ENCODE measurements at regions of chr6 and their contacts with region 1.

Region 1: GRCh38 chr6:36759148-36759759 is 61.6 kb downstream of the RAB44 start:
- DNase-seq: peak; percentile 71 to 77 (median 76)
- H3K4me3 ChIP-seq: no peak overlapping the region
- H3K4me3 Mint-ChIP-seq: peak overlapping the region in 1 of 8 donors; percentile 47
- H3K27ac ChIP-seq: no peak overlapping the region
- H3K27ac Mint-ChIP-seq: peak overlapping the region; percentile 37 to 96 (median 86)
- H3K4me1 ChIP-seq: peaks cover 43% of the 10 kb centered on the region
- H3K4me1 Mint-ChIP-seq: peaks cover 39 to 50% (median 44%) of the 10 kb centered on the region in 4 donors
- H3K27me3 ChIP-seq: no peaks in the 10 kb centered on the region
- H3K27me3 Mint-ChIP-seq: no peaks in the 10 kb centered on the region

Region 2: GRCh38 chr6:36340618-36341454 is 418.4 kb before region 1 on chr6:
- CTCF ChIA-PET with region 1: interaction called, 13 read pairs
- POLR2A ChIA-PET with region 1: no interaction called
- intact Hi-C with region 1: no loop called
- DNase-seq: peak; percentile 59 to 66 (median 64)
- H3K4me3 ChIP-seq: no peak overlapping the region
- H3K4me3 Mint-ChIP-seq: peak overlapping the region; percentile 63 to 85 (median 74)
- H3K27ac ChIP-seq: no peak overlapping the region
- H3K27ac Mint-ChIP-seq: peak overlapping the region in 4 of 7 donors; percentile 7 to 88 (median 58)
- H3K4me1 ChIP-seq: peaks cover 20% of the 10 kb centered on the region
- H3K4me1 Mint-ChIP-seq: peaks cover 9 to 33% (median 14%) of the 10 kb centered on the region in 4 donors
- H3K27me3 ChIP-seq: peaks cover 7% of the 10 kb centered on the region
- H3K27me3 Mint-ChIP-seq: peaks cover 6 to 9% of the 10 kb centered on the region in 2 donors

Region 3: GRCh38 chr6:36428911-36429310 is 330.3 kb before region 1 on chr6:
- CTCF ChIA-PET with region 1: interaction called, 10 read pairs
- POLR2A ChIA-PET with region 1: no interaction called
- intact Hi-C with region 1: no loop called
- DNase-seq: peak in 1 of 5 donors; percentile 4
- H3K4me3 ChIP-seq: no peak overlapping the region
- H3K4me3 Mint-ChIP-seq: no peak overlapping the region
- H3K27ac ChIP-seq: no peak overlapping the region
- H3K27ac Mint-ChIP-seq: no peak overlapping the region
- H3K4me1 ChIP-seq: peaks cover 3% of the 10 kb centered on the region
- H3K4me1 Mint-ChIP-seq: peaks cover under 1 to 3% (median under 1%) of the 10 kb centered on the region in 4 donors
- H3K27me3 ChIP-seq: no peaks in the 10 kb centered on the region
- H3K27me3 Mint-ChIP-seq: no peaks in the 10 kb centered on the region

Region 4: GRCh38 chr6:36546920-36547645 is 212.2 kb before region 1 on chr6 and contains the start of gene STK38:
- CTCF ChIA-PET with region 1: interaction called, 6 read pairs
- POLR2A ChIA-PET with region 1: interaction called, 3 read pairs
- intact Hi-C with region 1: loop called (anchors 2 kb)
- DNase-seq: peak; percentile 85 to 90 (median 87)
- H3K4me3 ChIP-seq: peak within 1 kb of the TSS; percentile 89 to 99
- H3K4me3 Mint-ChIP-seq: peak within 1 kb of the TSS; percentile 94 to 100 (median 100)
- H3K27ac ChIP-seq: peak within 1 kb of the TSS; percentile 92
- H3K27ac Mint-ChIP-seq: peak within 1 kb of the TSS; percentile 94 to 99 (median 98)
- H3K4me1 ChIP-seq: peaks cover 48% of the 10 kb centered on the region
- H3K4me1 Mint-ChIP-seq: peaks cover 23 to 65% (median 39%) of the 10 kb centered on the region in 4 donors
- H3K27me3 ChIP-seq: no peaks in the 10 kb centered on the region
- H3K27me3 Mint-ChIP-seq: no peaks in the 10 kb centered on the region
- total RNA-seq, gene STK38: 186 to 190 TPM

Region 5: DNA sequence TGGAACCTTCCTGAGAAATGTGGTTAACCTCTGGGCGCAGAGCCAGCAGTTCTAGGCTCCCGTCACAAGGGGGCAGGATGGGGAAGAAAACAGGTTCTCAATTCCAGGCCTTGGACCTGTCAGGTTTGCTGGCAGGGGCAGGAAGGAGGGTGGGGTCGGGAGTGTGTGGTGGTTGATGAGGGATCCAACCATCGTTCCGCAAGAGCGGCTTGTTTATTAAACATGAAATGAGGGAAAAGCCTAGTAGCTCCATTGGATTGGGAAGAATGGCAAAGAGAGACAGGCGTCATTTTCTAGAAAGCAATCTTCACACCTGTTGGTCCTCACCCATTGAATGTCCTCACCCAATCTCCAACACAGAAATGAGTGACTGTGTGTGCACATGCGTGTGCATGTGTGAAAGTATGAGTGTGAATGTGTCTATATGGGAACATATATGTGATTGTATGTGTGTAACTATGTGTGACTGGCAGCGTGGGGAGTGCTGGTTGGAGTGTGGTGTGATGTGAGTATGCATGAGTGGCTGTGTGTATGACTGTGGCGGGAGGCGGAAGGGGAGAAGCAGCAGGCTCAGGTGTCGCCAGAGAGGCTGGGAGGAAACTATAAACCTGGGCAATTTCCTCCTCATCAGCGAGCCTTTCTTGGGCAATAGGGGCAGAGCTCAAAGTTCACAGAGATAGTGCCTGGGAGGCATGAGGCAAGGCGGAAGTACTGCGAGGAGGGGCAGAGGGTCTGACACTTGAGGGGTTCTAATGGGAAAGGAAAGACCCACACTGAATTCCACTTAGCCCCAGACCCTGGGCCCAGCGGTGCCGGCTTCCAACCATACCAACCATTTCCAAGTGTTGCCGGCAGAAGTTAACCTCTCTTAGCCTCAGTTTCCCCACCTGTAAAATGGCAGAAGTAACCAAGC is 135.5 kb before region 1 on chr6:
- CTCF ChIA-PET with region 1: interaction called, 66 read pairs
- POLR2A ChIA-PET with region 1: interaction called, 7 read pairs
- intact Hi-C with region 1: loop called (anchors 1 kb)
- DNase-seq: peak; percentile 65 to 78 (median 73)
- H3K4me3 ChIP-seq: no peak overlapping the region
- H3K4me3 Mint-ChIP-seq: no peak overlapping the region
- H3K27ac ChIP-seq: no peak overlapping the region
- H3K27ac Mint-ChIP-seq: peak overlapping the region; percentile 32 to 82 (median 69)
- H3K4me1 ChIP-seq: peaks cover 9% of the 10 kb centered on the region
- H3K4me1 Mint-ChIP-seq: peaks cover 5 to 16% (median 9%) of the 10 kb centered on the region in 4 donors
- H3K27me3 ChIP-seq: no peaks in the 10 kb centered on the region
- H3K27me3 Mint-ChIP-seq: no peaks in the 10 kb centered on the region

Region 6: GRCh38 chr6:36724514-36725390 is 34.5 kb before region 1 on chr6:
- CTCF ChIA-PET with region 1: interaction called, 11 read pairs
- POLR2A ChIA-PET with region 1: no interaction called
- intact Hi-C with region 1: loop called (anchors 5 kb)
- DNase-seq: peak in 2 of 5 donors; percentile 15 to 19
- H3K4me3 ChIP-seq: no peak overlapping the region
- H3K4me3 Mint-ChIP-seq: no peak overlapping the region
- H3K27ac ChIP-seq: no peak overlapping the region
- H3K27ac Mint-ChIP-seq: no peak overlapping the region
- H3K4me1 ChIP-seq: peaks cover 14% of the 10 kb centered on the region
- H3K4me1 Mint-ChIP-seq: peaks cover 18 to 29% (median 25%) of the 10 kb centered on the region in 4 donors
- H3K27me3 ChIP-seq: no peaks in the 10 kb centered on the region
- H3K27me3 Mint-ChIP-seq: no peaks in the 10 kb centered on the region

Region 7: DNA sequence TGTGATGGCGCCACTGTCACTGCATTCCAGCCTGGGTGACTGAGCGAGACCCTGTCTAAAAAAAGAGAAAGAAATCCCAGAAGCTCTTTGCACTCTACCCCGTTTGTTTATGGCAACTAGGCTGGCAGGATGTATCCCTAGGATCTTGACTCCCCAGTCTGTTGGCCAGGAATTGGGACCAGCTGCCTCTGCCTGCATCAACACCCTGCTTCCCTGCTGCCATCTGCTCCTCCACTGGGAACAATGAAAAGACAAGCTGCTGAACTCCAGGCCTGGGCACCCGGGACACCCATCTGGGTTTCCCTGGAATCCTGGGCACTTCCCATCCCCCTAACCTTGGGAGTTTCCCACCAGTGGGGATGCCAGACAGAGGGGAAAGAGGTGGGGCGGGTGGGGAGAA is 15.1 kb after region 1 on chr6:
- CTCF ChIA-PET with region 1: interaction called, 230 read pairs
- POLR2A ChIA-PET with region 1: interaction called, 7 read pairs
- intact Hi-C with region 1: no loop called
- DNase-seq: no peak
- H3K4me3 ChIP-seq: no peak overlapping the region
- H3K4me3 Mint-ChIP-seq: no peak overlapping the region
- H3K27ac ChIP-seq: no peak overlapping the region
- H3K27ac Mint-ChIP-seq: no peak overlapping the region
- H3K4me1 ChIP-seq: peaks cover 18% of the 10 kb centered on the region
- H3K4me1 Mint-ChIP-seq: peaks cover 20 to 23% (median 22%) of the 10 kb centered on the region in 4 donors
- H3K27me3 ChIP-seq: no peaks in the 10 kb centered on the region
- H3K27me3 Mint-ChIP-seq: no peaks in the 10 kb centered on the region

Region 8: DNA sequence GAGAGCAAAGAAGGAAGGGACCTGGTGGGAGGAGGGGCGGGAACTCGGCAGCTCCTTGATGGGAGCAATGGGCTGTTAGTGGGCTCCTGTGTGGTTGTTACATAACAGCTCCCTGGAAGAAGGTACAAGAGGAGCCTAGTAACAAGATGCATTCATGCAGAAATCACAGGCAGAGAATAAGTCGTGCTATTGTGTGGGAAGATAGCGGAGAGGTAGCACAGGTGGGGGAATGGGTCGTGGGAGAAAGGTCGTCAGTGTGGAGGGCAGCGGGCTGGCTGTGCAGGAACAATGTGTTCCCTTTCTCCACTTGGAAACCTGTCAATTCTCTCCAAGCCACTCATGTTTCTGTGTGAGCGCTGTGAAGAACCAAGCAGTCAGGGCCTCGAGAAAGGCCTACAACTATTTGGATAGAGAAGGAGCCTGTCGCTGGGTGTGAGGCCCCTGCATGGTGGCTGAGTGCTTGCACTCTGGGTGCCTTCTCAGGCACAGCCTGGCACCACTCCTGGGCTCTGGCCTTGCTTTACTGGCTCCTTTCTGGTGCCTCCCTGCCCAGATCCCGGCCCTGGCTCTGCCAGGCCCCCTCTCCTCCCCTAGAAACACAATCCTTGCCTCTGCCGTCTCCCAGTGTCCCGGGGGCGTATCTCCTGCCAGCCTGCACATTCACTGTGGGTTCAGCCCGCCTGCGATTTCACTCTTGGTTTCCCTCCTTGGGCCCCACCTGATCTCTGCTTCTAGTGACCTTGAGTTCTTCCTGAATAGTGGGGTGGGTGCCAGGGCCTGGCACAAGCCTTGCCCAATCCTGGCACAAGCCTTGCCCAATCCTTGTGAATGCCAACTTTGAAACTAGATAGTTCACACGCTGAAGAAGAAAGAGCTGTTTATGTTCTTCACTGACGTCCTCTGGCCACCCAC is 238.8 kb after region 1 on chr6:
- CTCF ChIA-PET with region 1: no interaction called
- POLR2A ChIA-PET with region 1: no interaction called
- intact Hi-C with region 1: no loop called
- DNase-seq: no peak
- H3K4me3 ChIP-seq: no peak overlapping the region
- H3K4me3 Mint-ChIP-seq: peak overlapping the region in 1 of 8 donors; percentile 2
- H3K27ac ChIP-seq: no peak overlapping the region
- H3K27ac Mint-ChIP-seq: no peak overlapping the region
- H3K4me1 ChIP-seq: no peaks in the 10 kb centered on the region
- H3K4me1 Mint-ChIP-seq: peaks cover 0 to 2% (median 0%) of the 10 kb centered on the region in 4 donors
- H3K27me3 ChIP-seq: no peaks in the 10 kb centered on the region
- H3K27me3 Mint-ChIP-seq: peaks cover 1% of the 10 kb centered on the region in 2 donors

Region 9: DNA sequence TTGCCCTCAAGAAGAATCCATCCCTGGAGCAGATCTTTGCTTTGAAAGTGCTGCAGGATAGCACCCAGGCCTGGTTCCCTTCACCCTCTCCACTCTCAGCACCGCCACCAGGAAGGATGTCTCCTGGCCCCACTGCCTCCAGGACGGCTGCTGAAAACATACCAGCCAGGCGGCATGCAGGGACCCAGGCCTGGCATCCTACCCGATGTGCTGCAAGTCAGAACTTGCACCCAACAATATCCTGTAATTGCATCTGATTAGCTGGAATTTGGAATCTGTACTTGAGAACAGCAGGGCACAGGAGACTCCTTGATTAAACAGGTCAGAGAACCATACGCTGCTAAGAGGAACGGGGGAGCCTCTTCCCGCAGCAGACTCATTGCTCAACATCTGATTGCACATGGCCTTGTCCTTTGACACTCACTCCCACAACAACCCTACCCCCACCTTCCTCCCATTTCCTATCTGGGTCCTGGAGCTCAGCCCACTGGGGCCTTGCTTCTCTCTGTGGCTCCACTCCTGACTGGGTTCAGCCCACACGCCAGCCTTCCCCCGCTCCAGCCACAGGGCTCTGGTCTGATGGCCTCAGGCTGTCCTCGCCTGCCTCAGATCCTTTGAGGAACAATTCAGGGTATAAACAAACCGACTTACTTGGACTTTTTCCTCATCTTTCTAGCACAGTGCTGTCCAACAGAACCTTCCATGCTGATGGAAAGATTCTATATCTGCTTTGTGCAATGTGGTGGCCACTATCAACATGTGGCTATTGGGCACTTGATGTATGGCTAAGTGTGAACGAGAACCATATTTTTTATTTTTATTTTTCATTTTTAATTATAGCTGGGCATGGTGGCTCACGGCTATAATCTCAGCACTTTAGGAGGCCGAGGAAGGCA is 324.2 kb after region 1 on chr6:
- CTCF ChIA-PET with region 1: no interaction called
- POLR2A ChIA-PET with region 1: no interaction called
- intact Hi-C with region 1: no loop called
- DNase-seq: no peak
- H3K4me3 ChIP-seq: no peak overlapping the region
- H3K4me3 Mint-ChIP-seq: no peak overlapping the region
- H3K27ac ChIP-seq: no peak overlapping the region
- H3K27ac Mint-ChIP-seq: peak overlapping the region in 2 of 7 donors; percentile 29 to 42
- H3K4me1 ChIP-seq: no peaks in the 10 kb centered on the region
- H3K4me1 Mint-ChIP-seq: peaks cover 0 to 4% (median 0%) of the 10 kb centered on the region in 4 donors
- H3K27me3 ChIP-seq: no peaks in the 10 kb centered on the region
- H3K27me3 Mint-ChIP-seq: no peaks in the 10 kb centered on the region